ENCODE measurements at regions of chr5 and their contacts with region 1.

Region 1: DNA sequence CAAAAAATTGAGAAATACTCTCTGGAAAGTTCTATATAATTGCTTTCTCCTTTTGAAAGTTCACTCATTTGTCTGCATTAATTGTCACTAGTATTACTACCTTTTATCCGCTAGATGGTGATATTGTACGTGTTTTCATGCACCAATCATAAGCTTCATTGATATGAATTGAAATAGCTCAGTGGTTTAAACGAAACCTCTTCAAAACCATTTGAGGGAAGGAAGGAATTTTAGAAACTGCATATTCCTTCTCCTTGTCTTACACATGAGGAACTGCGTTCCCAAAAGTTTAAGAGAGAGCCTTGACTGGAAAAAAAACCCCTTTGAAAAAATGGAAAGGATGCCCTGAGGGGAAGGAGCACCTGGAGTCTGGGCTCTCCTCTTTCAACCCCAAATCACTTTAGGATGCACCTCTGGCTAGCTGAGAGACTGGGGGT is 98.6 kb downstream of the YTHDC2 start:
- DNase-seq: peak; percentile 53
- H3K4me3 ChIP-seq: no peak overlapping the region; a peak in 1 of 4 replicates
- H3K27ac ChIP-seq: no peak overlapping the region
- H3K4me1 ChIP-seq: peaks cover 0 to 2% of the 10 kb centered on the region in 2 experiments; a peak in 1 of 4 replicates
- H3K27me3 ChIP-seq: no peaks in the 10 kb centered on the region
- CTCF ChIP-seq: peak; percentile 70
- EP300 ChIP-seq: no peak
- RAD21 ChIP-seq: peak; percentile 83

Region 2: DNA sequence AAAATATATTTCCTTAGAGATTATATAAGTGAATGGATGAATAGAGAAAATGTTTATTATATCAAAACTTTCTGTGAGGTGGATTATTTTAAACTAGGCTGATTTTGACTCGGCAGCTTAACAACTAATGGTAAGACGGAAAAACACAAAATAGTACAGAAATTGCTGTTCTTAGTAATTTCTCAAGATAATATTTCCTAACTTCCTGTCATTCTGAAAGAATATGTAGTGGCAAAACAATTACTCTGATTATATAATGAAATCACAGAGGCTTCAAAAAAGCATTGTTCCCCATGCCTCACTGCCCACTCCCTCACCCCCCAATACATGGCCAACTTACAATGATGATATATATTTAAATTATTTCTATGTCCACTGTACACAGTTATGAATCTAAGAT is 13.2 kb before region 1 on chr5:
- CTCF ChIA-PET with region 1: interaction called, 19 read pairs
- POLR2A ChIA-PET with region 1: no interaction called
- DNase-seq: no peak
- H3K4me3 ChIP-seq: no peak overlapping the region
- H3K27ac ChIP-seq: no peak overlapping the region
- H3K4me1 ChIP-seq: no peaks in the 10 kb centered on the region
- H3K27me3 ChIP-seq: no peaks in the 10 kb centered on the region
- CTCF ChIP-seq: no peak
- EP300 ChIP-seq: no peak
- RAD21 ChIP-seq: no peak

Region 3: DNA sequence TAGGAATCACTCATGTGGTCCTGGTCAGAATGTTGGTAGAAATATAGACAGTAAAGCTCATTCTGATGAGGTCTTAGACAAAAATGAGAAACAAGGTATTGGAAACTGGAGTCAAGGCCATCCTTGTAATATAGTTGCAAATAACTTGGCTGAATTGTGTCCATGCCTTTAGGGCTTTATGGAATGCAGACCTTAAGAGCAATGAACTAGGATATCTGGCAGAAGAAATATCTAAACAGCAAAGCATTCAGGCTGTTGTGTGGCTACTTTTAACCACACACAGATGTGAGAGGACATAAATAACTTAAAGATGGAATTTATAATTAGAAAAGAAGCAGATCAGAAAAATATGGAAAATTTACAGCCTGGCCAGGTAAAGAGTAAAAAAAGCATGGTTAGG is 29.6 kb after region 1 on chr5:
- CTCF ChIA-PET with region 1: interaction called, 10 read pairs
- POLR2A ChIA-PET with region 1: no interaction called
- DNase-seq: no peak
- H3K4me3 ChIP-seq: no peak overlapping the region
- H3K27ac ChIP-seq: no peak overlapping the region
- H3K4me1 ChIP-seq: no peaks in the 10 kb centered on the region
- H3K27me3 ChIP-seq: no peaks in the 10 kb centered on the region
- CTCF ChIP-seq: no peak
- EP300 ChIP-seq: no peak
- RAD21 ChIP-seq: no peak

Region 4: GRCh38 chr5:113663880-113664541 is 51.9 kb after region 1 on chr5:
- CTCF ChIA-PET with region 1: interaction called, 68 read pairs
- POLR2A ChIA-PET with region 1: no interaction called
- DNase-seq: peak; percentile 15
- H3K4me3 ChIP-seq: no peak overlapping the region
- H3K27ac ChIP-seq: no peak overlapping the region
- H3K4me1 ChIP-seq: no peaks in the 10 kb centered on the region
- H3K27me3 ChIP-seq: no peaks in the 10 kb centered on the region
- CTCF ChIP-seq: peak; percentile 60
- EP300 ChIP-seq: no peak
- RAD21 ChIP-seq: peak; percentile 42

Region 5: DNA sequence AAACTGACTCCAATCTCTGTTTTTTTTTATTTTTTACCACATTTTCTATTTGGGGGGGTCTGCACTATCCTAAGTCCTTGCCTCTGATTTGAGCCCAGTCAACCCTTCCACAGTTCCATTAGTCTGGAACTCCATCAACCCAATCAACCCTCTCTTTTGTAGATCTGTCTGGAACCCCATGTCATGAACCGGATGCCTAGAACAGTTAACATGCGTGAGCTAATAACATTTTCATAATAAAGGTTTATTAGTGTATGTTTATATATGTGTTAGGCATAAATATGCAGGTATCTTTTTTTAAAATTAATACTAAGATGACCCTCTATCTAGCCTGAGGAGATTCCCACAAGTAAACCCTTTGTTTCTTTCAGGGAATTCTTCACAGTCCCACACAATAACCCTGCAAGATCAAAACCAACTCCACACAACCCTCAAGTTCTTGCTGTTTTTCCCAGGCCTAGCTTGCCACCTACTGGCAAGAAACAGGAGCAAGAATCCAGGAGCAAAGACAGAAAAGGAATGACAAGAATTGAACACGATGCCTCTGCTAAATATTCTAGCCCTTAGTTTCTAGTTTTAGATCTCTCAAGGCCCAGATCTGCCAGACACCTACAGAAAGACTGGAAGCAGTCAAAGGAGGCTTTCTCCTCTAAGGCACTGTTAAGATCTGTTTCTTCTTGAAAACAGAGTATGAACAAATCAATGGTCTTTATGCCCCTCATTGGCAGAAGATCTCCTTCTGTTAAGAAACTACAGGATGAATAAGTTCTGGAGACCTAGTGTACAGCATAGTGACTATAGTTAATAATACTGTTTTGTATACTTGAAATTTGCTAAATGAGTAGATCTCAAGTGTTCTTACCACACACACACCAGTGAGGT is 1457.2 kb after region 1 on chr5:
- CTCF ChIA-PET with region 1: interaction called, 19 read pairs
- POLR2A ChIA-PET with region 1: no interaction called
- DNase-seq: peak; percentile 7
- H3K4me3 ChIP-seq: peak overlapping the region in 1 of 2 experiments; percentile 33; a peak in 1 of 4 replicates
- H3K27ac ChIP-seq: no peak overlapping the region
- H3K4me1 ChIP-seq: no peaks in the 10 kb centered on the region
- H3K27me3 ChIP-seq: no peaks in the 10 kb centered on the region; the same call in 1 of the 2 replicates
- CTCF ChIP-seq: peak; percentile 78
- EP300 ChIP-seq: no peak
- RAD21 ChIP-seq: peak; percentile 76

Measured in SK-N-SH (cell line).